ENCODE measurements at regions of chr16 and their contacts with region 1.

Region 1: DNA sequence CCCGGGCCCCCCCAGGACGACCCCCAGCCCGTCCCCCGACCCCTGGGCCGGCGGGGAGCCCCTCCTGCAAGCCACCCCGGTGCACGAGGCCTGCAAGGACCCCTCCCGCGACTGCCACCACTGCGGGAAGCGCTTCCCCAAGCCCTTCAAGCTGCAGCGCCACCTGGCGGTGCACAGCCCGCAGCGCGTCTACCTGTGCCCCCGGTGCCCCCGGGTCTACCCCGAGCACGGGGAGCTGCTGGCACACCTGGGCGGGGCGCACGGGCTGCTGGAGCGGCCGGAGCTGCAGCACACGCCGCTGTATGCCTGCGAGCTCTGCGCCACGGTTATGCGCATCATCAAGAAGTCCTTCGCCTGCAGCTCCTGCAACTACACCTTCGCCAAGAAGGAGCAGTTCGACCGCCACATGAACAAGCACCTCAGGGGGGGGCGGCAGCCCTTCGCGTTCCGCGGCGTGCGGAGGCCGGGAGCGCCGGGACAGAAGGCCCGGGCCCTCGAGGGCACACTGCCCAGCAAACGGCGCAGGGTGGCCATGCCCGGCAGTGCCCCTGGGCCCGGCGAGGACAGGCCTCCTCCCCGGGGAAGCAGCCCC is 15.6 kb upstream of the ZFPM1 start:
- H3K4me3 Mint-ChIP-seq: no peak overlapping the region
- H3K27ac Mint-ChIP-seq: no peak overlapping the region
- H3K4me1 Mint-ChIP-seq: peaks cover 17% of the 10 kb centered on the region
- H3K27me3 Mint-ChIP-seq: peaks cover 41% of the 10 kb centered on the region

Region 2: DNA sequence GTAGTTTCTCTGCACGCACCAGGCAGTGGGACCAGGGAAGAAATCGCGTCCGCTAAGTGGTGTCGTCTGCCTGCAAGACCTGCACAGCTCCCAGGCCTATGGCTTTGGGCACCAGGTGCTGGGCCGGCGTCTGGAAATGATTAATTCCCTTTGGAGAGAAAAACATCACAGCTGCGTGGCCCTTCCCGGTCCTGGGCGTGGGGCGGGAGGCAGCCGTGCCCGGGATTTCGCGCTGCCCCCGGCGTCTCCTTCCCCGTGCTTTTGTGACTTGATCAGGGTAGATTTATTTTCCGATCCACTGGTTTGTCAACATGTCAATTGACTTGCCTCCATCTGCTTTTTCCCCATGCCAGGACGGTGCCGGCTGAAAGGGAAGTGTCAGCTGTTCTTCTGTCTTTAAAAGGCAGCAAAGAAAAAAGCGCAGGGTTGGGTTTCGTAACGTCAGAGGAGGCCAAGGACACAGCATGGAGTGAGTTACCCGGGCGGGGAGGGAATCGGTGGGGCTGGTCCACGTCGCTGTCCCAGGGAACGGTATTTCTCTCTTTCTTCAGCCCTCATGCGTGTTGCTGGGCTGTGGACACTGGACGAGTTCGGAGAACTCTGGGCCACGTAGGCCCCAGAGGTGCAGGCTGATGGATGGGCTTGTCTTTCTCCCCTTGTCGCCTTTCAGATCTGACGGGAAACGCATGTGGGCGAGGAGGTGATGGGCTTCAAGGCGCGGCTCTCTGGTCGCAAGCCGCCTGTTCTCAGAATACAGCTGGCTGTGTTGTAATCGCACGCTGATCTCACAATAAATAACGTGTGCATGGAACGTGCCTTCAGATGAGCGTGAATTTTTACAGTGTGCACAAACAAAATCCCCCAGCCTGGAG is 242.8 kb before region 1 on chr16:
- intact Hi-C with region 1: loop called (anchors 2 kb)
- H3K4me3 Mint-ChIP-seq: no peak overlapping the region
- H3K27ac Mint-ChIP-seq: no peak overlapping the region
- H3K4me1 Mint-ChIP-seq: peaks cover 22% of the 10 kb centered on the region
- H3K27me3 Mint-ChIP-seq: peaks cover 49% of the 10 kb centered on the region

Region 3: DNA sequence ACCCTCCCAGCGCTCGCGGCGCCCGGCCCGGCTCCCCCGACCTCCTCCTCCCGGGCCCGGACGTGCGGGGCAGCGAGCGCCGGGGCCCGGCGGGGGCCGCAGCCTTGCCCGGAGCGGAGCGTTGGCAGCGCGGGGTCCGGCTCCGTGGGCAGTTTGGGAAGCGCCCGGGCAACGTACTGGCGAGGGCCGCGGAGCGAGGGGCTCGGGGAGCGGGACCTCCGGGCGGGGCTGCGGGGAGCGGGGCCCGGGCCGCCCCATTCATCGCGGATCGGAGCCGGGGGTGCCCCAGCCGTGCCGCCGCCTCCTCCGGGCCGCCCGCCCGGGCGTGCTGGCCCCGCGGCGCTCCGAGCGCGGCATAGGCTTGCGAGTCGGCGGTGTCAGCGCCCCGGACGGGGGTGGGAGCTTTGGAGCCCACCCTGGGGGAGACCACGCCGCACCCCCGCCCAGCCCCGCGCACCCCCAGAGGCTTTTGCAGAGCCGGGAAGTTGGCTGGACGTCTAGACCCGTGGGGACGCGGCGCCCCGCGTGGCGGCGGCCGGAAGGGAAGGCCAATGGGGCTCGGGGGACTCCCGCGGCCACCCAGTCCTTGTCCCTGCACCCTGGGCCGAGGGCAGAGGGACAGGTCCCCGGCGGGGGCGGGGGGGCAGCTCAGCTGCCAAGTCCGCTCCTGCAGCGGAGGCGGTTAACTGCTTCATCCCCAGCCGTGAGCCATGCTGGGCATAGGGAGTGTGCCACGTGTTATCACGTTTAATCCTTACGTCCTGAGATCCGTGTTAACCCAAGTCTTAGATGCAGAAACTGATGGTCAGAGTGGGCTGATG is 53.9 kb before region 1 on chr16:
- intact Hi-C with region 1: no loop called
- H3K4me3 Mint-ChIP-seq: no peak overlapping the region
- H3K27ac Mint-ChIP-seq: no peak overlapping the region
- H3K4me1 Mint-ChIP-seq: peaks cover 5% of the 10 kb centered on the region
- H3K27me3 Mint-ChIP-seq: peaks cover 45% of the 10 kb centered on the region

Measured in dendritic cell treated with granulocyte-macrophage colony-stimulating factor and Interleukin-4, amounts not matched to agents 40 ng/mL and 50 ng/mL, for 4 days (primary cell).